Common myeloid progenitor, CD34-positive (primary cell): ENCODE measurements at regions of chr9 and their contacts with region 1.

Region 1: GRCh38 chr9:108761655-108762347 is 94.0 kb downstream of the ACTL7B start:
- DNase-seq: peak; percentile 47 to 75 (median 65)
- H3K4me3 ChIP-seq: no peak overlapping the region
- H3K27ac ChIP-seq: no peak overlapping the region
- H3K4me1 ChIP-seq: peaks cover 0 to 10% (median 7%) of the 10 kb centered on the region in 4 experiments
- H3K27me3 ChIP-seq: no peaks in the 10 kb centered on the region

Region 2: DNA sequence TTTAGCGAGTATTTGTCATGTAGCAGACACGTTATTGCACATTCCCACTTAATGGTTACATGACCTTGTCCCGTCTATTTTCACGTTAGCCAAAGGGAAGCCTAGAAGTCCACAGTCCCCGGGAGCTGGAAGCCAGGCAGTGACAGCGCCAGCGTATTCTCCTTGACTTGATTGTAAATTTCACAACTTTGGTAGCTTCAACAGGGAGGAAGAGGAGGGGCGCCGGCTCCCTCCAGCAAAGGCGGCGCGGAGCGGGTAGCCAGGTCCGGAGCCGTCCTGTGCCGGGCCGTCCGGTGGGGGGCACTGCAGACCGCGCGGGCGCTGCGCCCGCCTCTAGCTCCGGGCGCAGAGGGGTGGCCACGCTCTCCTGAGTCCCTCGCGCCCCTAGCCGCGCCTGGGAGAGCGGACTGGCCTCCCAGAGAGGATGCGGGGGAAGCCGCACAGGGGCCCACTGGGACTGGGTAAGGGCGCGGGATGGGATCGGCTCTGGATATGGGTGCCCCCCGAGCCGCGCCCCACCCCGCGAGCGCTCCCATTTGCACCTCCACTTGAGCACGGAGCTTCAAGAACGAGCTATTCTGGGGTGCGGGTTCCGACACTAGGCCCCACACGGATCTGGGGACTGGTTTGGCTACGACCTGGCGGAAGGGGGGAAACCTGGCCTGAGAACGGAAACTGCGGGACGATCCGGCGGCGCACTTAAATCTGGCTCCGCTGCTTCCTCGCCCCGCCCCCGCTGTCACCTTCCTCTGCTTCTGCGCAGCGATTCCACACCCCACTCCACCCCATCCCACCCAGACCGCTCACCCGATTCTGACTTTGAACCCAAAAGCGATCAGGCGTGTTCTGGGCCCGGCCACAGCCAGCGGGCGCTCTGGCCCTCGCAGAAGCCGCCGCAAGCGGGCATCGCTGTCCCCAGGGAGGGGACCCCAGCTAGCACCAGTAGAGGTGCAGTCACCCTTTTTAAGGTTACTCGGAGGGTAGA is 1296.0 kb before region 1 on chr9:
- CTCF ChIA-PET with region 1: interaction called, 13 read pairs
- POLR2A ChIA-PET with region 1: no interaction called
- DNase-seq: peak; percentile 45 to 67 (median 64)
- H3K4me3 ChIP-seq: peak overlapping the region in 6 of 7 experiments; percentile 44 to 80 (median 61)
- H3K27ac ChIP-seq: no peak overlapping the region
- H3K4me1 ChIP-seq: peaks cover 0 to 14% (median 12%) of the 10 kb centered on the region in 4 experiments
- H3K27me3 ChIP-seq: peaks cover 8 to 41% (median 16%) of the 10 kb centered on the region in 5 experiments

Region 3: GRCh38 chr9:108775901-108776306 is 14.1 kb after region 1 on chr9:
- CTCF ChIA-PET with region 1: interaction called, 13 read pairs
- POLR2A ChIA-PET with region 1: no interaction called
- DNase-seq: no peak
- H3K4me3 ChIP-seq: no peak overlapping the region
- H3K27ac ChIP-seq: no peak overlapping the region
- H3K4me1 ChIP-seq: peaks cover 0 to 9% (median under 1%) of the 10 kb centered on the region in 4 experiments
- H3K27me3 ChIP-seq: no peaks in the 10 kb centered on the region

Region 4: DNA sequence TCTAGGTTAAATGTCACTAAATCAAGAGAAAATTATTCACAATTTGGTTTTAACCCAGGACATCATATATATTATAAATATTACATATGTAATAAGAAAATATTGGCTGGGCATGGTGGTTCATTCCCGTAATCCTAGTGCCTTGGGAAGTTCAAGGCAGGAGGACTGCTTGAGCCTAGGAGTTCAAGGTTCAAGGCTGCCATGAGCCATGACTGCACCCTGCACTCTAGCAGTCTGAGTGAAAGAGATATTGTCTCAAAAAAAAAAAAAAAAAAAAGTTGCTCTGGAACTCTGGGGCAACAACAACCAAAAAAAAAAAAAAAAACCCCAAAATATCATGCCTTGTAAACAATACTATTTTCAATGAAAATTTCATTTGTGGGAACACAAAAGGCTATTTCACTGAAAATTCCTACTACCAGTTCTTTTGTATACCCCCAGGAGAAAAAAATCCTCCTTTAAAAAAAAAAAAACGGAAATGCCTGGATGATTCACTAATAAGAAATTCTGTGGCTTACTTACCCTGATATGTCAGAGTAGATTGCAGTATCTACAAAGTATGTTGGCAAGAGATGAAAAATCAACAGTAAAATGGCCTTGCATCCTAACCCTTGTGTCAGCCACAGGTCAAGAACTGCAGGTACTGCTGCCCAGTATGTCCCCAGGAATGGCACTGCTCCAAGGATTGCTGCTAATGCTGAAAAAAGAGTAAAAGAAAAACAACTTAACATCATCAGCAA is 274.1 kb after region 1 on chr9:
- CTCF ChIA-PET with region 1: no interaction called
- POLR2A ChIA-PET with region 1: no interaction called
- DNase-seq: no peak
- H3K4me3 ChIP-seq: no peak overlapping the region
- H3K27ac ChIP-seq: no peak overlapping the region
- H3K4me1 ChIP-seq: no peaks in the 10 kb centered on the region
- H3K27me3 ChIP-seq: no peaks in the 10 kb centered on the region